ENCODE measurements at regions of chr6 and their contacts with region 1.

Region 1: DNA sequence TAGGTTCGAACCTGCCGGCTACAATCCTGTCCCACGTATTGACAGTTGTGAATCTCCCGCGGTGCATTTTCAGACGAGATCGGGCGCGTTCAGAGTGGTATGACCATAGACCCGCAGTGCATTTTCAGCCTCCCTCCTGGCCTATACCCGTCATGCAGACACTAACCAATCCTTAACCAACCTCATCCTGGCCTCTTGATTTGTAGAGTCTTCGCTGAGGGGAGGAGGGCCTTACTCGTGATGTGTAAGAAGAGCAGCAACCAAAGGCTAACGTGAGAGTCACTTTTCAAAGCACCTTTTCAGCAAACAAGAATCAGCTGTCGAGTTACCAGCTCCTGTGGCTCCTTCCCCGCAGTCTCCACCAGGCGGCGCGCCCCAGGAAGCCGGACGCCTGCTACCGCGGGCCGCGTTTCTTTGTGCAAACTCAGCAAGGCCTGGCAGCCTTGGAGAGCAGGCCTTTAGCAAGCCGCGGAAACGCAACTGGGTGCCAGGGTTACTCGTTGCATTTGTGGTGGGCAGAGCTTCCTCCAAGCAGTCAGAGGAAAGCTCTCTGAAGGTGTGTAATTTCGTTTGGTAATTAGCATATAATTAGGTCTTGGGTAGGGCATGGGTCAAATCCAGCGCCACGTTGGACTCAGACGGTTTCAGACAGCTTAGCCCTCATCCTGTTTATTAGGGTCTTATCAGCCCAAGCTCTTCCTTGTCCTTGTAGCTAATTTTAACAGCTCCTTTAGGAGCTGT is 139.8 kb downstream of the OR2B2 start:
- DNase-seq: peak; percentile 75 to 87 (median 80)
- H3K4me3 ChIP-seq: no peak overlapping the region
- H3K4me3 Mint-ChIP-seq: peak overlapping the region in 4 of 7 donors; percentile 41 to 68 (median 54)
- H3K27ac ChIP-seq: peak overlapping the region; percentile 57
- H3K27ac Mint-ChIP-seq: peak overlapping the region in 4 of 8 donors; percentile 29 to 78 (median 51)
- H3K4me1 ChIP-seq: peaks cover 5% of the 10 kb centered on the region
- H3K4me1 Mint-ChIP-seq: peaks cover 7 to 10% (median 8%) of the 10 kb centered on the region in 3 donors
- H3K27me3 ChIP-seq: no peaks in the 10 kb centered on the region
- H3K27me3 Mint-ChIP-seq: peaks cover 19 to 32% of the 10 kb centered on the region in 2 donors

Region 2: GRCh38 chr6:27157459-27158315 is 614.7 kb before region 1 on chr6:
- CTCF ChIA-PET with region 1: interaction called, 24 read pairs
- POLR2A ChIA-PET with region 1: no interaction called
- DNase-seq: peak; percentile 71 to 88 (median 76)
- H3K4me3 ChIP-seq: peak overlapping the region; percentile 75
- H3K4me3 Mint-ChIP-seq: peak overlapping the region; percentile 79 to 93 (median 84)
- H3K27ac ChIP-seq: peak overlapping the region; percentile 51
- H3K27ac Mint-ChIP-seq: peak overlapping the region; percentile 52 to 90 (median 78)
- H3K4me1 ChIP-seq: peaks cover 15% of the 10 kb centered on the region
- H3K4me1 Mint-ChIP-seq: peaks cover 31 to 44% (median 39%) of the 10 kb centered on the region in 3 donors
- H3K27me3 ChIP-seq: no peaks in the 10 kb centered on the region
- H3K27me3 Mint-ChIP-seq: no peaks in the 10 kb centered on the region

Region 3: GRCh38 chr6:27406092-27406491 is 366.3 kb before region 1 on chr6:
- CTCF ChIA-PET with region 1: no interaction called
- POLR2A ChIA-PET with region 1: no interaction called
- DNase-seq: no peak
- H3K4me3 ChIP-seq: no peak overlapping the region
- H3K4me3 Mint-ChIP-seq: no peak overlapping the region
- H3K27ac ChIP-seq: no peak overlapping the region
- H3K27ac Mint-ChIP-seq: no peak overlapping the region
- H3K4me1 ChIP-seq: no peaks in the 10 kb centered on the region
- H3K4me1 Mint-ChIP-seq: no peaks in the 10 kb centered on the region
- H3K27me3 ChIP-seq: no peaks in the 10 kb centered on the region
- H3K27me3 Mint-ChIP-seq: peaks cover 7 to 11% of the 10 kb centered on the region in 2 donors

Region 4: GRCh38 chr6:27753668-27754407 is 18.6 kb before region 1 on chr6:
- CTCF ChIA-PET with region 1: interaction called, 53 read pairs
- POLR2A ChIA-PET with region 1: no interaction called
- DNase-seq: peak; percentile 27 to 63 (median 47)
- H3K4me3 ChIP-seq: peak overlapping the region; percentile 71
- H3K4me3 Mint-ChIP-seq: peak overlapping the region; percentile 84 to 97 (median 86)
- H3K27ac ChIP-seq: peak overlapping the region; percentile 39
- H3K27ac Mint-ChIP-seq: peak overlapping the region; percentile 33 to 99 (median 76)
- H3K4me1 ChIP-seq: peaks cover 19% of the 10 kb centered on the region
- H3K4me1 Mint-ChIP-seq: peaks cover 25 to 38% (median 32%) of the 10 kb centered on the region in 3 donors
- H3K27me3 ChIP-seq: no peaks in the 10 kb centered on the region
- H3K27me3 Mint-ChIP-seq: peaks cover 0 to 10% of the 10 kb centered on the region in 2 donors

Region 5: DNA sequence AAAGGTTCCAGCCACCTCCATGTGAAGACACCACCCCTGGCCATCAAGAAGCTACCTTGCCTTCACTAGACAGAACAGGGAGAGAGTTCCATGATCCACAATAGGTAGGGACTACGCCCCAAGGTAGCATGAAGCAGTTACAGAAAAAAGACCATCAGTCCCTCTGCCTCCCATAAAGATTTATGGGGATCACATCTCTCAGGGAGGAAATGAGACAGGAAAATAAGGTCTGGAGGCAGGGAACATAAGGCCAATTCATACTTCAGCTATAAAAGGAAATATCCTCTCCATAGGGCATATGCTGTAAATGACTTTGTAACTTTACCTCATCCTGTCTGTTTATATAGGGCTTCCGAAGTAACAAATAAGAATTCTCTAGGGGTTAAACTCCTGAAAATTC is 10.3 kb after region 1 on chr6:
- CTCF ChIA-PET with region 1: interaction called, 27 read pairs
- POLR2A ChIA-PET with region 1: no interaction called
- DNase-seq: no peak
- H3K4me3 ChIP-seq: no peak overlapping the region
- H3K4me3 Mint-ChIP-seq: no peak overlapping the region
- H3K27ac ChIP-seq: no peak overlapping the region
- H3K27ac Mint-ChIP-seq: no peak overlapping the region
- H3K4me1 ChIP-seq: no peaks in the 10 kb centered on the region
- H3K4me1 Mint-ChIP-seq: no peaks in the 10 kb centered on the region
- H3K27me3 ChIP-seq: no peaks in the 10 kb centered on the region
- H3K27me3 Mint-ChIP-seq: peaks cover 7 to 50% of the 10 kb centered on the region in 2 donors

Region 6: DNA sequence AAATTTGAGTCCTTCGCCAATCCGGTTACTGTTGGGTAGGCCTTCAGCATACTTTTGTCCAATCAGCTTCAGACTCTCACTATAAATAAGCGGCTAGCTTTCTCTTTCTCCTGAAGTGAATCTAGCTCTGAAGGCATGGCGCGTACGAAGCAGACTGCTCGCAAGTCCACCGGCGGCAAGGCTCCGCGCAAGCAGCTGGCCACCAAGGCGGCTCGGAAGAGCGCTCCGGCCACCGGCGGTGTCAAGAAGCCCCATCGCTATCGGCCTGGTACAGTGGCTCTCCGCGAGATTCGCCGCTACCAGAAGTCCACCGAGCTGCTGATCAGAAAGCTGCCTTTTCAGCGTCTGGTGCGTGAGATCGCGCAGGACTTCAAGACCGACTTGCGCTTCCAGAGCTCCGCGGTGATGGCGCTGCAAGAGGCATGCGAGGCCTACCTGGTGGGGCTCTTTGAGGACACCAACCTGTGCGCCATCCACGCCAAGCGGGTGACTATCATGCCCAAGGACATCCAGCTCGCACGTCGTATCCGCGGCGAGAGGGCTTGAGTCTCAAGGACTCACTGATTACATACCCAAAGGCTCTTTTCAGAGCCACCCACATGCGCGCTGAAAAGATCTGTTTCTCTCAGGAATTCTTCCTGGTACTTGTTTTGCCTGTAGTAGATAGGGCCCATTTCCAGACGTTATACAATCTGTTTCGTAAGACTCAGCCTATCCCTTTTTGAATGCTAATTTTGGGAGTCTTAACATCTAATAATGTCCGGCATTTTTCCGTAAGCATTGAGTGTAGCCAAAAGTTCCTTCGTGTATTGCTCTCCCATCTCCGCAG is 37.7 kb after region 1 on chr6:
- CTCF ChIA-PET with region 1: interaction called, 20 read pairs
- POLR2A ChIA-PET with region 1: interaction called, 9 read pairs
- DNase-seq: peak; percentile 64 to 93 (median 88)
- H3K4me3 ChIP-seq: peak overlapping the region; percentile 78
- H3K4me3 Mint-ChIP-seq: peak overlapping the region; percentile 85 to 97 (median 94)
- H3K27ac ChIP-seq: peak overlapping the region; percentile 93
- H3K27ac Mint-ChIP-seq: peak overlapping the region; percentile 94 to 100 (median 97)
- H3K4me1 ChIP-seq: peaks cover 38% of the 10 kb centered on the region
- H3K4me1 Mint-ChIP-seq: peaks cover 54 to 69% (median 65%) of the 10 kb centered on the region in 3 donors
- H3K27me3 ChIP-seq: no peaks in the 10 kb centered on the region
- H3K27me3 Mint-ChIP-seq: peaks cover 0 to 6% of the 10 kb centered on the region in 2 donors

Region 7: GRCh38 chr6:27864906-27865849 is 92.7 kb after region 1 on chr6:
- CTCF ChIA-PET with region 1: interaction called, 10 read pairs
- POLR2A ChIA-PET with region 1: no interaction called
- DNase-seq: peak; percentile 42 to 89 (median 81)
- H3K4me3 ChIP-seq: peak overlapping the region; percentile 63
- H3K4me3 Mint-ChIP-seq: peak overlapping the region; percentile 93 to 99 (median 96)
- H3K27ac ChIP-seq: peak overlapping the region; percentile 83
- H3K27ac Mint-ChIP-seq: peak overlapping the region; percentile 87 to 99 (median 97)
- H3K4me1 ChIP-seq: peaks cover 25% of the 10 kb centered on the region
- H3K4me1 Mint-ChIP-seq: peaks cover 36 to 50% (median 45%) of the 10 kb centered on the region in 3 donors
- H3K27me3 ChIP-seq: no peaks in the 10 kb centered on the region
- H3K27me3 Mint-ChIP-seq: no peaks in the 10 kb centered on the region

Measured in CD8-positive, alpha-beta memory T cell (primary cell).